ENCODE measurements at regions of chr3 and their contacts with region 1.

Region 1: DNA sequence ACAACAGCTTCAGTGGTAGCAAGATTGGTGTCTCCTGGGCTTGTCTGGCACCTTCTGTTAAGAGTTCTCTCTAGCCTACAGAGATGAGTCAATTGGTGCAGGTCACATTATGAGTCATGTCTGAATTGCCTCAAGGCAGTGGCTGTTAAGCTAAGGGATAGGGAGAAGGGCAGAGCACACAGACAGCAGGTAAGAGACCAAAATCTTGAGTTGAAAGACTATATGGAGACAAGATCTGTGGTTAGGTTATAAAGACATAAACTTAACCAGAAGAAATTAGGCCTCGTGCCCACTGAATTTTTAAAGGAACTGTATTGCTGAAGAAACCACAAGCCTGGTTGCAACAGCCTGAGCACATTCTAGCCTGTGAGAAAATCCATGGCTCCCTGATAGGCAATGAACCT is 19.2 kb upstream of the KPNA1 start:
- DNase-seq: peak; percentile 67
- ATAC-seq: peak; percentile 99
- H3K4me3 Mint-ChIP-seq: no peak overlapping the region
- H3K27ac Mint-ChIP-seq: no peak overlapping the region
- H3K4me1 Mint-ChIP-seq: peaks cover 34% of the 10 kb centered on the region
- H3K27me3 Mint-ChIP-seq: no peaks in the 10 kb centered on the region

Region 2: GRCh38 chr3:122392868-122393844 is 140.8 kb before region 1 on chr3:
- CTCF ChIA-PET with region 1: interaction called, 8 read pairs
- POLR2A ChIA-PET with region 1: no interaction called
- intact Hi-C with region 1: loop called in 1 of 2 experiments (anchors 5 kb)
- DNase-seq: no peak
- ATAC-seq: peak; percentile 55
- H3K4me3 Mint-ChIP-seq: no peak overlapping the region
- H3K27ac Mint-ChIP-seq: no peak overlapping the region
- H3K4me1 Mint-ChIP-seq: peaks cover 33% of the 10 kb centered on the region
- H3K27me3 Mint-ChIP-seq: no peaks in the 10 kb centered on the region

Region 3: DNA sequence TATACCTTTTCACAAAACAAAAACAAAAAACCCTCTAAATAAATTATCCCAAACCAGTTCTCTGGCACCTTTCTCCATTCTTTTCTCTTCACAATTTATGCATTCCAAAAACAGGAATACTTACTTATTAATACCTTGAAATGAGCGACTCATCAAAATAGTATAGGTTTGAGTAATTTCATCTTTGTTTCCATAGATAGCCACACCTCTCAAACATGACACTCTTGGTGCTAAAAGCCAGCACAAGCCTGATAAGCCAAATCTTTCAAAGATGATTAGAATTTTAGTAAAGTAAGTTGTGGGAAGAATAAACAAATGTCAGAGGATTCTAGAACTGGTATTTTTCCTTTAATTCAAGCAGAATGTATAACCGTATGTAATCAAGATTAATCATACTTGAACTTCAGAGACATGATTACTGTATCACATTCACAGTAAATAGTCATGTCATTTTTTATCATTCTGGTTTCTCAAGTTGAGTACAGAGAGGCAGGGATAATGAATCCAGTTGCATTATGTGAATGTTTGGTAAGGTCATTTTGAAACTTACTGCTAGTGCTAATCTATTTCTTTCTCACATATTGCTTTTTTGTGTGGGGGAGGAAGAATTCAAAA is 106.0 kb before region 1 on chr3:
- CTCF ChIA-PET with region 1: interaction called, 4 read pairs
- POLR2A ChIA-PET with region 1: no interaction called
- intact Hi-C with region 1: loop called in 1 of 2 experiments (anchors 5 kb)
- DNase-seq: no peak
- ATAC-seq: peak; percentile 93
- H3K4me3 Mint-ChIP-seq: no peak overlapping the region
- H3K27ac Mint-ChIP-seq: peak overlapping the region; percentile 70
- H3K4me1 Mint-ChIP-seq: peaks cover 18% of the 10 kb centered on the region
- H3K27me3 Mint-ChIP-seq: no peaks in the 10 kb centered on the region

Region 4: DNA sequence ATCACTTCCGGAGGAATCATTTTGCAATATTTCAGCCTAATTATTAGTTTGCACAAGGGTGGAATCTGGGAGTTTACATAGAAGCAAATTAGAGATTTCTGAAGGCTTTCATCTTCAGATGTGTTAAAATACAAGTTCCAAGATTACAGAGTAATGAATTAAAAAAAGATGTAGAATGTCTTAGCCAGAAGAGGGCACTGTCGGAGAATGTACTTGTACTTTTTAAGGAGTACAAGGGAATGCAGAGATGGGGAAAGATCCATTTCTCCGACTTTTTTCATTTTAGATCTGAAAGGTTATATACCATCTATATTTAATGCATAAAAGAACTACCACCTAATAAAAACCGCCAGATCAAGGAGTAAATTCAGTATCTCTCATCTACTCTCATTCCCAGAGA is 74.9 kb before region 1 on chr3:
- CTCF ChIA-PET with region 1: interaction called, 4 read pairs
- POLR2A ChIA-PET with region 1: no interaction called
- intact Hi-C with region 1: loop called in 1 of 2 experiments (anchors 5 kb)
- DNase-seq: no peak
- ATAC-seq: no peak
- H3K4me3 Mint-ChIP-seq: no peak overlapping the region
- H3K27ac Mint-ChIP-seq: peak overlapping the region; percentile 29
- H3K4me1 Mint-ChIP-seq: peaks cover 6% of the 10 kb centered on the region
- H3K27me3 Mint-ChIP-seq: no peaks in the 10 kb centered on the region

Region 5: DNA sequence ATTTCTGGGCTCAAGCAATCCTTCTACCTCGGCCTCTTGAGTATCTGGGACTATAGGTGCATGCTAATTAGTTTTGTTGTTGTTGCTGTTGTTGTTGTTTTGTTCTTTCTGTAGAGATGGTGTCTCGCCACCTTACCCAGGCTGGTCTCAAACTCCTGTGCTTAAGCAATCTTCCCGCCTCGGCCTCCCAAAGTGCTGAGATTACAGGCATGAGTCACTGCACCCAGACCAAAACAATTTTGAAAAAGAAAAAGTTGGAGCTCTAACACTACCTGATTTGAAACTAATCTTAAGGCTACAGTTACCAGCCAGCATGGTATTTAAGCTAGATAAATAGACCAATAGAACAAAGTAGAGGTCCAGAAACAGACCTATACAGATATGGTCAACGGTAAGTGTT is 48.9 kb before region 1 on chr3:
- CTCF ChIA-PET with region 1: no interaction called
- POLR2A ChIA-PET with region 1: no interaction called
- intact Hi-C with region 1: loop called in 1 of 2 experiments (anchors 1 kb)
- DNase-seq: no peak
- ATAC-seq: no peak
- H3K4me3 Mint-ChIP-seq: no peak overlapping the region
- H3K27ac Mint-ChIP-seq: no peak overlapping the region
- H3K4me1 Mint-ChIP-seq: peaks cover 69% of the 10 kb centered on the region
- H3K27me3 Mint-ChIP-seq: no peaks in the 10 kb centered on the region

Region 6: DNA sequence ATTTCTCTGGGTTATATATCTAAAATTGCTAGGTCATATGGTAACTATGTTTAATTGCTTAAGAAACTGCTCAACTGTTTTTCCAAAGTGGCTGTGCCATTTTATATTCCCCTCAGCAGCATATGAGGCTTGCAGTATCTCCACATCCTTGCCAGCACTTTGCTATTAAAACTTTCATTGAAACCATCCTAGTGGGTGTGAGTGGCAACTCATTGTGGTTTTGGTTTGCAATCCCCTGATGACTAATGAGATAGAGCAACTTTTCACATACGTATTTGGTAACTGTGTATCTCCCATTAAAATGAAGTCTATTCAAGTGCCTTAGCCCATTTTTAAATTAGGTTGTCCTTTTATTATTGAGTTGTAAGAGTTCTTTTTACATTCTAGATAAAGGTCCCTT is 36.5 kb before region 1 on chr3:
- CTCF ChIA-PET with region 1: no interaction called
- POLR2A ChIA-PET with region 1: no interaction called
- intact Hi-C with region 1: loop called (anchors 1 to 5 kb)
- DNase-seq: peak; percentile 58
- ATAC-seq: peak; percentile 98
- H3K4me3 Mint-ChIP-seq: no peak overlapping the region
- H3K27ac Mint-ChIP-seq: no peak overlapping the region
- H3K4me1 Mint-ChIP-seq: peaks cover 50% of the 10 kb centered on the region
- H3K27me3 Mint-ChIP-seq: peaks cover 2% of the 10 kb centered on the region

Region 7: GRCh38 chr3:122576174-122576940 is 42.4 kb after region 1 on chr3:
- CTCF ChIA-PET with region 1: no interaction called
- POLR2A ChIA-PET with region 1: no interaction called
- intact Hi-C with region 1: loop called in 1 of 2 experiments (anchors 1 kb)
- DNase-seq: peak; percentile 78
- ATAC-seq: peak; percentile 90
- H3K4me3 Mint-ChIP-seq: peak overlapping the region; percentile 24
- H3K27ac Mint-ChIP-seq: peak overlapping the region; percentile 87
- H3K4me1 Mint-ChIP-seq: peaks cover 58% of the 10 kb centered on the region
- H3K27me3 Mint-ChIP-seq: no peaks in the 10 kb centered on the region

Region 8: DNA sequence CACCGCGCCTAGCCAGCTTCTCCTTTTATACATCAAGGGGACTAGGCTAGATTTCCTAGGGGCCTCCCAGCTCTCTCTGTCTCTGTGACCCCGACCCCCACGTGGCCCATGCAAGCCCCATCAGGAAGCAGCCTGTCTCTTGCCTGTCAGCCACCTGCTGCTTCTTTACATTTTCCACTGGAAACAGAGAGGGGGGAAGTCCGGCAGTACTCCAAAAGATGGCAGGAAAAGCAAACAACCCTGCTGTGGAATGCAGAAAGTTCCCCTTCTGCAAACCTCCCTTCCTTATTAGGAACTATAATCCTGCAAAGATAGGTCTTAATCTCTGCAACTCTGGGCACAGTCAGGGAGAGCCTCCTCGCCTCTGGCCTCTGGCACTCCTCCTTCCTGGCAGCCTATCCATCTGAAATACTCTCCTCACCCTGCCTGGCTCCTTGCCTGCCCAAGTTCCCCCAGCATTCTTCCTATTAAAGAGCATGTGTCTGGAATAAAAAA is 1098.3 kb after region 1 on chr3:
- CTCF ChIA-PET with region 1: no interaction called
- POLR2A ChIA-PET with region 1: no interaction called
- intact Hi-C with region 1: no loop called
- DNase-seq: no peak
- ATAC-seq: no peak
- H3K4me3 Mint-ChIP-seq: no peak overlapping the region
- H3K27ac Mint-ChIP-seq: no peak overlapping the region
- H3K4me1 Mint-ChIP-seq: no peaks in the 10 kb centered on the region
- H3K27me3 Mint-ChIP-seq: peaks cover 2% of the 10 kb centered on the region